Left cardiac atrium (tissue), 4 donors: ENCODE measurements at regions of chr1 and their contacts with region 1.

Region 1: DNA sequence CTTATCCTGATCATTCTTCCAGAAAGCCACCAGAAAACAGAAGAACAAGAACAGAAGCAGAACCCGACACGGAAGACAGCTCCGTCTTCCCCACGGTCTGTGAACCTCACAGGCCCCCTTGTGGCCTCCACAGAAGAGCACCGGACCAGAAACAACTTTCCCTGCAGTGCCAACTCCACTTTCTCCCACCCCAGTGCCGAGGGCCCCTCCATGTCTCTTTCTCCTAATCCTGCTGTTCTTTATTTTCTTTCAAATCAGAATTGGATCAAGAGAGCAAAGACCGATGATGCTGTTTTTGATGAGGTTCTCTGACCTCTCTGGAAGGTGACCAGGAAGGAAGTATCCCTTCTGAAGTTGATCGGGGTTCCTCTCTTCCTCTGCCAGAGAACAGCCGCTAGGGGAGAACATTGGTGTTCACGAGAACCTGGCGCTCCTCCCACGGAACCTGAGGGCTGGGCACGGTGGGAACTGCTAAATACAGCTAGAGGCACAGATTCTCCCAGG is 58.9 kb upstream of the CTTNBP2NL start:
- DNase-seq: peak; percentile 55
- ATAC-seq: peak; percentile 89 to 91

Region 2: GRCh38 chr1:111789666-111790316 is 547.3 kb before region 1 on chr1:
- intact Hi-C with region 1: loop called in 1 of 2 experiments (anchors 10 kb)
- DNase-seq: no peak
- ATAC-seq: peak; percentile 64 to 67

Region 3: GRCh38 chr1:111801071-111801841 is 535.8 kb before region 1 on chr1:
- intact Hi-C with region 1: loop called (anchors 10 kb)
- DNase-seq: peak; percentile 52
- ATAC-seq: peak; percentile 90 to 92